HEK293T (cell line): ENCODE measurements at regions of chr3 and their contacts with region 1.

Region 1: GRCh38 chr3:88410259-88410658 is 260.5 kb downstream of the C3orf38 start:
- DNase-seq: no peak

Region 2: DNA sequence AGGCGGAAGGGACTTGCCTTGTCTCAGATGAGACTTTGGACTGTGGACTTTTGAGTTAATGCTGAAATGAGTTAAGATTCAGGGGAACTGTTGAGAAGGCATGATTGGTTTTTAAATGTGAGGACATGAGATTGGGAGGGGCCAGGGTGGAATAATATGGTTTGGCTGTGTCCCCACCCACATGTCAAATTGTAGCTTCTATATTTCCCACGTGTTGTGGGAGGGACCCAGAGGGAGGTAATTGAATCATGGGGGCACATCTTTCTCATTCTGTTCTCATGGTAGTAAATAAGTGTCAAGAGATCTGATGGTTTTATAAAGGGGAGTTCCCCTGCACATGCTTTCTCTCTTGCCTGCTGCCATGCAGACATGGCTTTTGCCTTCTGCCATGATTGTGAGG is 440.6 kb before region 1 on chr3:
- CTCF ChIA-PET with region 1: interaction called, 11 read pairs
- POLR2A ChIA-PET with region 1: no interaction called
- DNase-seq: no peak